CD8-positive, alpha-beta T cell (primary cell): ENCODE measurements at regions of chrX and their contacts with region 1.

Region 1: DNA sequence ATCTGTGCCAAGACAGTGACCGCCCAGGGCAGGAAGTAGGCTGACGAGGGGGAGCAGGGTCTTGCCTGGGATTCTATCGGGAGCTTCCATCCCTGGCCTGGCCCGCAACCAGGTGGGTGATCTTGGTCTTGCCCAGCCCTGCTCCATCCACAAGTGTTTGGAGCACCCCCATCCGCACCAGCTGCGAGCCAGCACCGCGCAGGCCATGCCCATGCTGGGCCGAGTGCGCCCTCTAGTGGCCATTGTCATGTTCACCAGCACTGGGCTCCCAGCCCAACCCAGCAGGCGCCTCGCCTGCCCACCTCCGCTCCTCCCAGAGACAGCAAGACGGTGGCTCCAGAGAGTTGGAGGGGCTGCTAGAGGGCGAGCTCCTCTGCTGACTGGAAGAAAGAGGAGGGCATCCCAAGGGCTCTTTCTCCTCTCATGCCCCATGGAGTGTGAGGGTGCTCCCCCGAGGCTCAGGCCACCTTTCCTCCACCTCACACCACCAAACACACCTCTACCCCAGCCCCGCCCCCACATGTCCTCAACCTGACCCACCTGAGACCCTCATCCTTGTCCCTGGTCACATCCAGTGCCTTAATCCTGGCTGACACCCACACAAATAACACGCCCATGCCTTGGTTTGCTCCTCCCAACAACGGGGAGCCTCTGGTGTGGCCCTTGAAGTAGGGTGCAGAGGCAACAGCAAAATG is 9.8 kb upstream of the ATP2B3 start:
- DNase-seq: peak; percentile 68 to 92 (median 82)
- ATAC-seq: peak; percentile 99
- H3K4me3 ChIP-seq: no peak overlapping the region
- H3K4me3 Mint-ChIP-seq: no peak overlapping the region
- H3K27ac ChIP-seq: no peak overlapping the region
- H3K27ac Mint-ChIP-seq: no peak overlapping the region
- H3K4me1 ChIP-seq: peaks cover 5% of the 10 kb centered on the region
- H3K4me1 Mint-ChIP-seq: no peaks in the 10 kb centered on the region
- H3K27me3 ChIP-seq: no peaks in the 10 kb centered on the region
- H3K27me3 Mint-ChIP-seq: no peaks in the 10 kb centered on the region
- CTCF ChIP-seq: peak; percentile 62

Region 2: DNA sequence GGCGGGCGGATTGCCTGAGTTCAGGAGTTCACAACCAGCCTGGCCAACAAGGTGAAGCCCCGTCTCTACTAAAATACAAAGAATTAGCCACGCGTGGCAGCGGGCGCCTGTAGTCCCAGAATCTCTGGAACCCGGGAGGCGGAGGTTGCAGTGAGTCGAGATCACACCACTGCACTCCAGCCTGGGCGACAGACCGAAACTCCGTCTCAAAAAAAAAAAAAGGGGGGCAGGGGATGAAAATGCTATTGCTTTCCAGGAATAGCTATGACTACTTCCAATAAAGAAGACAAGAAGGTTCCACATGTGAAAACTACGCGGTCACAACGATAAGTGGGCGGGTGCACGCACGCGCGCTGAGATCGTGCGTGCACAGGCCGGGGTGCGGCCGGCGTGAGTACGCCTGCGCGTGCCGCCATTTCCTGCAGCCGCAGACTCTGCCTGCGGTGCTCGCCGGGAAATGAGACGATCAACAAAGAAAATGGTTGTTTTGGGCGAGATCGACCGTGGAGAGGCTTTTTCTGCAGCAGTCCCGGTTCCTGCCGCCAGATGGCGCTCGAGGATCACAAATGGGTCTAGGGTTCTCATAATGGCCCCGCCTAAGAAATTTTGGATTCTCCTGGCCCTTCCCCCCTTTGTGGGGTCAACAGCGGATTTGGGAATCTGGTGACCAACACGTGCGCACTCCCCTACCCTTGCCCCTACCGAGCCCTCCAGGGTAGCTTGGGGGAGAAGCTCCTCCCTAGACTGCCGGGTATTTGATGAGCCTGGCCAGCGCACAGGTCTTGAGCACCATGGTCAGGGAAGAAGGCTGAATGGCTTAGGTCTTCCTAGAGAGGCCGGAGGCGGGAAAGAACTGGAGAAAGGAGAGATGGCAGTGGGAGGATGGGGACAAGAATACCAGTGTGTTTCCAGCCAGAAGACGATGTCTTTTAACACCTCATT is 548.8 kb before region 1 on chrX:
- CTCF ChIA-PET with region 1: interaction called, 4 read pairs
- POLR2A ChIA-PET with region 1: no interaction called
- intact Hi-C with region 1: loop called (anchors 1 to 5 kb)
- DNase-seq: peak; percentile 82 to 97 (median 90)
- ATAC-seq: peak; percentile 97
- H3K4me3 ChIP-seq: peak overlapping the region; percentile 29 to 34
- H3K4me3 Mint-ChIP-seq: peak overlapping the region; percentile 71
- H3K27ac ChIP-seq: peak overlapping the region; percentile 48 to 73
- H3K27ac Mint-ChIP-seq: peak overlapping the region; percentile 89
- H3K4me1 ChIP-seq: peaks cover 6% of the 10 kb centered on the region
- H3K4me1 Mint-ChIP-seq: peaks cover 5% of the 10 kb centered on the region
- H3K27me3 ChIP-seq: no peaks in the 10 kb centered on the region
- H3K27me3 Mint-ChIP-seq: no peaks in the 10 kb centered on the region
- CTCF ChIP-seq: peak; percentile 66

Region 3: GRCh38 chrX:153032397-153033118 is 475.1 kb before region 1 on chrX:
- CTCF ChIA-PET with region 1: interaction called, 14 read pairs
- POLR2A ChIA-PET with region 1: no interaction called
- intact Hi-C with region 1: loop called (anchors 1 kb)
- DNase-seq: peak; percentile 33 to 80 (median 64)
- ATAC-seq: peak; percentile 73
- H3K4me3 ChIP-seq: peak overlapping the region; percentile 50 to 52
- H3K4me3 Mint-ChIP-seq: peak overlapping the region; percentile 86
- H3K27ac ChIP-seq: peak overlapping the region; percentile 42 to 51
- H3K27ac Mint-ChIP-seq: peak overlapping the region; percentile 91
- H3K4me1 ChIP-seq: peaks cover 10% of the 10 kb centered on the region
- H3K4me1 Mint-ChIP-seq: peaks cover 17% of the 10 kb centered on the region
- H3K27me3 ChIP-seq: no peaks in the 10 kb centered on the region
- H3K27me3 Mint-ChIP-seq: no peaks in the 10 kb centered on the region
- CTCF ChIP-seq: peak; percentile 66

Region 4: DNA sequence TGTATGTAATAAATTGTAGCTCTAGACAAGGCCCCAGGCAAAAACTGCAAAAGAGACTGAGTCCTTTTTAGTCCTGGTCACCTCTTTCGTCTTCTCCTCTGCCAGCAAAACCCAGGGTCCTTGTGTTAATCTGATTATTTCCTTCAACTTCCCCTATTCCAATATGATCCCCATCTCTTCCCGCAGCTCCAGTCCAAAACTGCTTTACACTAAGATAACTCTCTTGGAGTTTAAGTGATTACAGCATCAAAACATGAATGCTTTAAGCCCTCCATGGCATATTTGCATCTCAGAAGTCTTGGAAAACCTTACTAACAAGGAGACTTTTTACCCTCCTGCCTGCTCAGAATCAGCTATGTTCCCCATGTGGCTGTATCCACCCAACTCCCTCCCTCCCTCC is 269.3 kb before region 1 on chrX:
- CTCF ChIA-PET with region 1: no interaction called
- POLR2A ChIA-PET with region 1: no interaction called
- intact Hi-C with region 1: no loop called
- DNase-seq: no peak
- ATAC-seq: no peak
- H3K4me3 ChIP-seq: no peak overlapping the region
- H3K4me3 Mint-ChIP-seq: no peak overlapping the region
- H3K27ac ChIP-seq: no peak overlapping the region
- H3K27ac Mint-ChIP-seq: no peak overlapping the region
- H3K4me1 ChIP-seq: no peaks in the 10 kb centered on the region
- H3K4me1 Mint-ChIP-seq: no peaks in the 10 kb centered on the region
- H3K27me3 ChIP-seq: no peaks in the 10 kb centered on the region
- H3K27me3 Mint-ChIP-seq: peaks cover 10% of the 10 kb centered on the region
- CTCF ChIP-seq: no peak

Region 5: DNA sequence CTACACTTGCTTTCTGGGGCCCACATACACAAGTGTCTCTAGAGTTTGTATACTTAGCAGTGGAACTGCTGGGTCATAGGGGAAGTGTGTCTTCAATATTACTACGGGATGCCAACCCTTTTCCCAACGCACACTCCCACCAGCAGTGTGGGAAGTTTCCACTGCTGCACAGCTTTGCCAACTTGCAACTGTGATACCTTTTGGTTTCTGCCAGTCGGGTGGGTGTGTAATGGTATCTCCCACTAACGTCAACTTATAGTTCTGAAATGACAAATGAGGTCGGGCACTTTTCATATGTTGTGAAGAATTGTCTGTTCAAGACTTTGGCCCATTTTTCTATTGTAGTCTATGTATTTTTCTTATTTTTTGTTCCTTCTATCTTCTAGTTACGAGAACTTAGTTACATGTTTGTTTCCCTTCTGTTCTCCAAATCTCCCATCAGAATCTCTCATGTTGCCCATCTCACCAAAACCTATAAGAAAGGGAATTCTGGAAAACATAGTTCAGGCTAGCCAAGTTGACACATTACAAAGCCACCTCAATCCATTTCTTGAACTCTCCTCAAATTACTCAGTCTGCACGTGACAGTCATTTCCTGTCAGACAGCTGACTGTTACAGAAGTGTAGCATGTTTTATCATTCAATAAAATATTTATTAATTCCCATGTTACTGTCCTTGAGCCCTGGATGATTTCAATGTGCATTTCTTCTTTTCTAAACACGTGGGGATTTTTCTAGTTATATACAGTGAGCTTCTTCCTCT is 137.2 kb before region 1 on chrX:
- CTCF ChIA-PET with region 1: no interaction called
- POLR2A ChIA-PET with region 1: no interaction called
- intact Hi-C with region 1: no loop called
- DNase-seq: no peak
- ATAC-seq: no peak
- H3K4me3 ChIP-seq: no peak overlapping the region
- H3K4me3 Mint-ChIP-seq: no peak overlapping the region
- H3K27ac ChIP-seq: no peak overlapping the region
- H3K27ac Mint-ChIP-seq: no peak overlapping the region
- H3K4me1 ChIP-seq: no peaks in the 10 kb centered on the region
- H3K4me1 Mint-ChIP-seq: no peaks in the 10 kb centered on the region
- H3K27me3 ChIP-seq: no peaks in the 10 kb centered on the region
- H3K27me3 Mint-ChIP-seq: peaks cover 2% of the 10 kb centered on the region
- CTCF ChIP-seq: no peak

Region 6: DNA sequence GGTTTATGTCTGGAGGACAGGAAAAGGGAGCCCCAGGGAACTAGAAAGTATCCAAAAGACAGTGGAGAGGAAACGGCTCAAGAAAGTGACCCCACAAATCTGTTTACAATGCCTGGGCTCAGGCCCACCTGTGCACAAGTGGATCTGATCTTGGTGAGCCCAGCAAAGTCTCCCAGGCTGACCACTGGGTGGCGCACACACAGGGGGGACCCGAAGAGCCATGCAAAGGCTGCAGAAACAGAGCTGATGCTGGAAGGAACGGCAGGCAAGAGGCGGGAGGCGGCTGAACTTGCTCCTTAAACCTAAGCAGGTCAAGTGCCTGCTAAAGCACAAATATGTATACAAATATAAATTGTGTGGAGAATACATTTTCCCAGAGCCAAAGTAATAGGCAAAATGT is 46.8 kb before region 1 on chrX:
- CTCF ChIA-PET with region 1: interaction called, 29 read pairs
- POLR2A ChIA-PET with region 1: interaction called, 3 read pairs
- intact Hi-C with region 1: loop called in 1 of 2 experiments (anchors 1 kb)
- DNase-seq: peak in 8 of 9 experiments; percentile 25 to 66 (median 52)
- ATAC-seq: peak; percentile 74
- H3K4me3 ChIP-seq: no peak overlapping the region
- H3K4me3 Mint-ChIP-seq: no peak overlapping the region
- H3K27ac ChIP-seq: no peak overlapping the region
- H3K27ac Mint-ChIP-seq: no peak overlapping the region
- H3K4me1 ChIP-seq: no peaks in the 10 kb centered on the region
- H3K4me1 Mint-ChIP-seq: peaks cover 1% of the 10 kb centered on the region
- H3K27me3 ChIP-seq: no peaks in the 10 kb centered on the region
- H3K27me3 Mint-ChIP-seq: no peaks in the 10 kb centered on the region
- CTCF ChIP-seq: peak; percentile 25